GM18951 (cell line): ENCODE measurements at regions of chr4 and their contacts with region 1.

Region 1: GRCh38 chr4:77203380-77204197 is 46.6 kb downstream of the CCNG2 start:
- POLR2A ChIP-seq: no peak

Region 2: GRCh38 chr4:76758290-76758882 is 445.2 kb before region 1 on chr4:
- in situ Hi-C with region 1: loop called (anchors 25 kb)
- POLR2A ChIP-seq: no peak

Region 3: DNA sequence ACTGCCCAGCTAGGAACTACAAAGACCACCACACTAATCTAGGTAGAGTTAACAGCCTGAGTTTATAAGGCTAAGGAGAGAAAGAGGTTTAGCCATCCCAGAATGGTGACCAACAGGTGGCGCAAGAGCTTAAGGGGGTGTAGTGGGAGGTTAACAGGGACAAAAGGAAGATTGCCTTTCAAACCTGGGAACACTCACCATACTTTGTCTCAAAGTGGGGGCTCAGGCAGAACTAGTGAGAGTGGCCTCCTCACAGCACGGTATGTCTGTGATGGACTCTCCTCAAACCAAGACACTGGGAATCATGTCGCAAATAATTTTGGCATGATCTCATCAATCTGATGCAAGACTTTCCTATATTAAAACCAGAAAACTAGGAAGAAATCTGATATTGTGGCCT is 151.2 kb before region 1 on chr4:
- in situ Hi-C with region 1: loop called (anchors 10 kb)
- POLR2A ChIP-seq: no peak

Region 4: GRCh38 chr4:77095101-77095821 is 108.3 kb before region 1 on chr4:
- in situ Hi-C with region 1: loop called (anchors 10 kb)
- POLR2A ChIP-seq: no peak